Calu3 (cell line): ENCODE measurements at regions of chr12 and their contacts with region 1.

Region 1: DNA sequence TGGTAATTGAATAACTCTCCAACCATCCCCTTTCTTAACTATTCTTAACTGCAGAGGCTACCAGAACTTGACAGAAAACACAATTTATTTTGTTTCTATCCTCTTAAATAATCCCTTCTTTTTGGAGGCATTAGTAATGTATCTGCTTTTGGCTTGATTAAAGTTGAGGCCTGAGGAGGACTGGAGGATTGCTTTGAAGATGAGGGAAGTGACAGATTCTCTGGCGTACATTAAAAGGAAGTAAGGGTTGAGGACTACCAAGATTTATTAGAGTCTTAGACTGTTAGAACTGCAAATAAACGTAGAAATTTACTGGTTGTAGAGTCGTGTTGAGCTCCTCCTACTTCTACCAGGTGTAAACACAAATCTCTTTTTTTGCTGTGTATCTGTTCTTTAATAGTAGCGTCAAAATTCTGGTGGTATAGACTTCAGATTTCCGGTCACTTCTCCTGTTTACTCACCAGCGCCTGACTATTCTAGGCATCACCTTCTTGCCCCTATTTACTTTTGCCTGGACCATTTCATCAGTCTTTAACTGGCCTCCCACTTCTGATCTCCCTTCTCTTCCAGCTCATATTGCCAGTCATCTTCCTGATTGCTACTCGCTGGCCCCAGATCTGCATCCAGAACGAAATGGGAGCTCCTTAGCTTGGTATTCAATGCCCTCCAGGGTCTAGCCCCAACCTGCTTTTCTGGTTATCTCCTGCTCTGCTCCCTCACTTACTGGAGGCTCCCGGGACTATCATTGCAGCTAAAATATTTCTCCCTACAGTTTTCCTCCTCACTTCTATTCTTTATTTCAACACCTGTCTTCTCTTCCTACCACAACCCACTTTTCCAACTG is 8.5 kb upstream of the EID3 start:
- DNase-seq: no peak
- H3K4me3 Mint-ChIP-seq: peak overlapping the region; percentile 48
- H3K27ac Mint-ChIP-seq: peak overlapping the region; percentile 42
- H3K4me1 Mint-ChIP-seq: peaks cover 67% of the 10 kb centered on the region
- H3K27me3 Mint-ChIP-seq: no peaks in the 10 kb centered on the region
- CTCF ChIP-seq: no peak

Region 2: DNA sequence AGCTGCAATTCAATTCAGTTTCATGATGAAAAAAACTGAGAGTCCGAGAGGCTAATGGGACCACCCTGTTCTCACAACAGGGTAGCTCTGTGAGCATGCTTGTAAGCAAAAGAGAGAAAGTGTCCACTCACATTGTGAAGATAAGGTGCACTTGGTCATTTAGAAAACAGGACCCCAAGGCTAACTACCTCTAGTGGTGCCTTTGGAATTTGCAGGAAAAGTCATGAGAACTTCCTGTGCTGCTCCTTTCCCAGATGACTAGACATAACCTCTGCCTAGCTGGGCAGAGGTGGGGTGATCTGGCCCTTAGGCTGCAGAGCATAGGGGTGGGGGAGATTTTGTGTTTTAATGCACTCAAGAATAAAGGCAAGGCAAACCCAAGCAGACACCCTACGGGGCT is 589.1 kb before region 1 on chr12:
- CTCF ChIA-PET with region 1: no interaction called
- intact Hi-C with region 1: no loop called
- DNase-seq: no peak
- H3K4me3 Mint-ChIP-seq: no peak overlapping the region
- H3K27ac Mint-ChIP-seq: no peak overlapping the region
- H3K4me1 Mint-ChIP-seq: no peaks in the 10 kb centered on the region
- H3K27me3 Mint-ChIP-seq: peaks cover 46% of the 10 kb centered on the region
- CTCF ChIP-seq: peak; percentile 12

Region 3: DNA sequence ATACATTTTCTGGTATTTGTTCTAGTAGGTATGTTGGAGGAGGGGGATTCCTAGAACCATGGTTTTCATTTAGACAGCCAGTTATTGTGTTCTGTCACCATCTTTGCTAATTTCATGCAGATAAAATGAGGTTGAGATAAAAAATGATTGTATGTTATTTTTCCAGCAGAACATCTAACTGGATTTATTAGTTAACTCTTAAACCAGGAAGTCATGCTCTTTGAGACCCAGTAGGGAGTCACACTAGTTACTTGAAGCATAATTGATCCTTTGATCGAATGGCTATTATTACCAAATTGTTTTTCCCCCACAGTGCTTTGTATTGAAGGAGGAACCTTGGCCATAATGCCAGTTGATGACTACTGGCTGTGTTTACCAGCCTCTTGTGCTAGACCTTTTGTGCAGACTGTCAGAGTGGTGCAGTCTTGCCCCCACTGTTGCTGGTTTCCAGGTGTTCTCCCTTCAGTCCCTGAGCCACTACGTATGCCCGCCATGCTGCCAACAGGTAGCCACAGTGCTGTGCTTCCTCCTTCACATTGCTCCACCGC is 14.5 kb after region 1 on chr12:
- CTCF ChIA-PET with region 1: interaction called, 11 read pairs
- intact Hi-C with region 1: no loop called
- DNase-seq: no peak
- H3K4me3 Mint-ChIP-seq: no peak overlapping the region
- H3K27ac Mint-ChIP-seq: peak overlapping the region; percentile 32
- H3K4me1 Mint-ChIP-seq: peaks cover 65% of the 10 kb centered on the region
- H3K27me3 Mint-ChIP-seq: no peaks in the 10 kb centered on the region
- CTCF ChIP-seq: no peak

Region 4: DNA sequence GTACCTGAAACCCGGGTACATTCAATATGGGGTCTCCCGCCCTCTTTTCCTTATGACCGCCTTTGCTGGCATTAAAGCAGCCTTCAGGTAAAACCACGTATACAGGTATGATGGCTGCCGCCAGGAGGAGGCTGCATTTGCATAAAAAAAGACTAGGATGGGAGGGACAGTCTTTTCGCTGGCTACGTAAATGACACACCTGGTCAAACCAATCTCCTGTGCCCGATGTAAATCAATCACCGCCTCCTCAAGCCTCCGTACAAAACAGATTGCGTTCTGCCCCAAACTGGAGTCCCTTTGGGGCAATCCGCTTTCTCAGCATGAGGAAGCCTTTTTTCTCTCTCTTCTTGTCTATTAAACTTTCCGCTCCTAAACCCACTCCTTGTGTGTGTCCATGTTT is 797.3 kb after region 1 on chr12:
- CTCF ChIA-PET with region 1: no interaction called
- intact Hi-C with region 1: no loop called
- DNase-seq: peak; percentile 51
- H3K4me3 Mint-ChIP-seq: peak overlapping the region; percentile 64
- H3K27ac Mint-ChIP-seq: no peak overlapping the region
- H3K4me1 Mint-ChIP-seq: no peaks in the 10 kb centered on the region
- H3K27me3 Mint-ChIP-seq: no peaks in the 10 kb centered on the region
- CTCF ChIP-seq: no peak